ENCODE measurements at regions of chr11 and their contacts with region 1.

Region 1: GRCh38 chr11:62193952-62194351 is 3.9 kb downstream of the SCGB1D1 start:
- DNase-seq: no peak
- H3K4me3 ChIP-seq: no peak overlapping the region
- CTCF ChIP-seq: no peak

Region 2: GRCh38 chr11:62169091-62169847 is 24.7 kb before region 1 on chr11:
- in situ Hi-C with region 1: loop called (anchors 5 kb)
- DNase-seq: no peak
- H3K4me3 ChIP-seq: no peak overlapping the region
- CTCF ChIP-seq: no peak

Region 3: GRCh38 chr11:62360685-62361084 is 166.7 kb after region 1 on chr11:
- in situ Hi-C with region 1: loop called (anchors 10 kb)
- DNase-seq: no peak
- H3K4me3 ChIP-seq: no peak overlapping the region
- CTCF ChIP-seq: no peak

Measured in astrocyte of the cerebellum (primary cell).